SK-N-SH (cell line): ENCODE measurements at regions of chr2 and their contacts with region 1.

Region 1: GRCh38 chr2:46481198-46482193 is 2.1 kb downstream of the TMEM247 start:
- DNase-seq: no peak
- H3K4me3 ChIP-seq: no peak overlapping the region
- H3K27ac ChIP-seq: peak overlapping the region in 1 of 2 experiments; percentile 52; a peak in 2 of 4 replicates
- H3K4me1 ChIP-seq: peaks cover 0 to 9% of the 10 kb centered on the region in 2 experiments; a peak in 2 of 4 replicates
- H3K27me3 ChIP-seq: no peaks in the 10 kb centered on the region
- CTCF ChIP-seq: no peak
- EP300 ChIP-seq: peak in 1 of 2 experiments; percentile 7; a peak in 1 of 4 replicates
- RAD21 ChIP-seq: no peak

Region 2: DNA sequence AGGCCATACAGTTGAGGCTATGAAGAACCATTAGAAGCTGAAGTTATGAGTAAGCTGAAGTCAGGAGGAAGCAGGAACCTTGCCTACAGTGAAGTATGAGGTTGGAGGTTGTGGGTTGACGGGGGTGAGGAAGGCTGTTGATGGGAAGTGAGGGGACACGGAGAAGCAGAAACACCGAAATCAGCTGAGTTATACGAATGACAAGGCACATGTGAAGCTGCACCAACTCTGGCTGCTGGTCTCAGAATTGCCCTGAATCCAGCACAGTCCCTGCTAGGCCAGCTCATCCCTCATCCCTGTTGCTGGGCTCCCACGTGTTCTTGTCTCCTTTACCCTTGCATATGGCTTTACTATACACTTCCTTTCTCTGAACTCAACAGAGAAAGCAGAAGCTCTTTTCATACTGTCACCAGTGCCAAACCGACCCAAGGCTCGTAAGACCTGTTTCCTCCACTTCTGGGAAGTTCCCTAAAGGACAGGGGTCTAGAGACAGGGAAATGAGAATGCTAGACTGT is 11.3 kb before region 1 on chr2:
- CTCF ChIA-PET with region 1: interaction called, 15 read pairs
- POLR2A ChIA-PET with region 1: no interaction called
- DNase-seq: no peak
- H3K4me3 ChIP-seq: no peak overlapping the region
- H3K27ac ChIP-seq: no peak overlapping the region
- H3K4me1 ChIP-seq: no peaks in the 10 kb centered on the region
- H3K27me3 ChIP-seq: no peaks in the 10 kb centered on the region
- CTCF ChIP-seq: no peak
- EP300 ChIP-seq: no peak
- RAD21 ChIP-seq: no peak